CD8-positive, alpha-beta T cell (primary cell): ENCODE measurements at regions of chr10 and their contacts with region 1.

Region 1: DNA sequence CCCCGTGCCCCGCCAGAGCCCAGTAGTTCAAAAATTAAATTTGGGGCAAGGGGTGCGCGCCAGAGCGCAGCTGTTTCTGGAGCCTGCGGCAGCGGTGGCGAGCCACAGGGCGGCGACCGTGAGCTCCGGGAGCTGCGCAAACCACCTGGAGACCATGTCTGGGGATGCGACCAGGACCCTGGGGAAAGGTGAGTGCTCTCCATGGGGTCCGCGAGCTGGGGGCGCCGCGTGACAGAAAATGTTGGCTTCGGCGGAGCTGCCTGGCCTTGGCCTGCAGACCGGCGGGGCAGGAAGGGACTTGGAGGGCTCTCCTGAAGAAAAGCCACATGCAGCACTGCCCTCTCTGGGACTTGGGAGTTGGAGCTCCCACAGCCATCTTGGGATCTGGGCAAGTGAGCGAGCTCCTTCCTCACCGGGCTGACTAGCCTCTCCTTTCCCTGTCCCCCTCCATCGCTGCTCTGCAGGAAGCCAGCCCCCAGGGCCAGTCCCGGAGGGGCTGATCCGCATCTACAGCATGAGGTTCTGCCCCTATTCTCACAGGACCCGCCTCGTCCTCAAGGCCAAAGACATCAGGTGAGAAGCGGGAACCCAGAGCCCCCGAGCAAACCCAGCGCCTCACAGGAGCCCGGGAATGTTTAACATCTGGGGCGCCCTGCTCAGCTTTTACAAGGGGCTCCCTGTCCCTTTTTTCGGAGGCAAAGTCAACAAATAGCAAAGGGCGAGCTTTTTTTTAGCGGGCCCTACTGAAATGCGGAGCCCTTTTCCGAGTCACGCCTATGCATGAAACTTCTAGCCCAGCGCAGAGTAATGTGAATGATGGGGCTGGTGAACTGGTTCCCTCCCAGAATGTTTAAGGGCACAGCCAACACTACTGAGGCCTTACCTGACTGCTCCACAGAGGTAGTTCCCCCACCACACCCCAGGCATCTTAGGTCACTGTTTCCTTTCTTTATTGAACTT is 6.1 kb downstream of the GSTO2 start:
- DNase-seq: peak in 8 of 9 experiments; percentile 8 to 66 (median 46)
- ATAC-seq: peak; percentile 87
- H3K4me3 ChIP-seq: peak overlapping the region; percentile 1 to 31
- H3K4me3 Mint-ChIP-seq: peak overlapping the region; percentile 54
- H3K27ac ChIP-seq: no peak overlapping the region
- H3K27ac Mint-ChIP-seq: no peak overlapping the region
- H3K4me1 ChIP-seq: peaks cover 6% of the 10 kb centered on the region
- H3K4me1 Mint-ChIP-seq: peaks cover 2% of the 10 kb centered on the region
- H3K27me3 ChIP-seq: peaks cover 0 to 5% of the 10 kb centered on the region in 2 experiments
- H3K27me3 Mint-ChIP-seq: peaks cover 18% of the 10 kb centered on the region
- CTCF ChIP-seq: peak; percentile 78

Region 2: DNA sequence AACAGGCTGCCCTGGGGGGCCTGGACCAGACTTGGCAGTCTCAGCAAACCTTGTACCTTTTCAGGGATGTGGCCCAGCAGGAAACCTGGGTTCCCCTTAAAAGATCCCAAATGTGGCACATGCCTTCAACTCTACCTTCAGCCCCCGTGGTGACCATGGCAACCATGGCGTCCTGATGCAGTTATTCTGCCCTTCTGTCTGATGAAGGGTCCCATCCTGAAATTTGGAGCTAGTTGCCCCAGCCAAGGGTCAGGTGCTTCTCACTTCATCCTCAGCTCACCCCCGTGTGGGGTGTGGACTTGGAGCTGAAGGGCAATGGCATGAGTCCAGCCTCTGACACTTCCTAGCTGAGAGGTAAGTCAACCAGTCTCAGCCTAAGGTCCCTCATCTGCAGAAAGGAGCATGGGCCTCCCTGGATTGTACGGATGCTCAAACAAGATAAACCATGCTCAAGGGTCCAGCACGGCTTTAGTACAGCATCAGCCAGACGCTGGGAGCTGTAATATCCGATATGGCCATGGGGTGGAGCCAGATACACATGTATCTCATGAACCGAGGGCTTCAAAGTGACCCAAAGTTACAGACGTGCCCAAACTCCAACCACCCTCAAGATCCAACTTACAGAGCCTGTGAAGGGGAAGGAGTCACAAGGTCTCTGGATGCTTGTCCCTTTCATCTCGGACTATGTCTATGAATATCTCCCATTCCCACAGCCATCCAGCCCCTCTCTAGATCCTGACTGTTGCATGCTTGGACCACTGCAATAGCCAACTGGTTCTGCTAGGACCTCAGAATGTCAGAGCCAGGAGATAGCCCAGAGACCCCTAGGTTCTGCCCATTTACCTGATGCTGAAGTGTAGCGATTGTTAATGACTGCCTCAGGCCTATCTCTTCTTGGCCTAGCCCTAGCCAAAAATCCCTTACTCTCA is 562.2 kb before region 1 on chr10:
- CTCF ChIA-PET with region 1: no interaction called
- POLR2A ChIA-PET with region 1: no interaction called
- intact Hi-C with region 1: loop called in 1 of 2 experiments (anchors 1 kb)
- DNase-seq: peak; percentile 68 to 88 (median 80)
- ATAC-seq: peak; percentile 97
- H3K4me3 ChIP-seq: no peak overlapping the region
- H3K4me3 Mint-ChIP-seq: no peak overlapping the region
- H3K27ac ChIP-seq: no peak overlapping the region
- H3K27ac Mint-ChIP-seq: no peak overlapping the region
- H3K4me1 ChIP-seq: no peaks in the 10 kb centered on the region
- H3K4me1 Mint-ChIP-seq: no peaks in the 10 kb centered on the region
- H3K27me3 ChIP-seq: no peaks in the 10 kb centered on the region
- H3K27me3 Mint-ChIP-seq: no peaks in the 10 kb centered on the region
- CTCF ChIP-seq: peak; percentile 92

Region 3: DNA sequence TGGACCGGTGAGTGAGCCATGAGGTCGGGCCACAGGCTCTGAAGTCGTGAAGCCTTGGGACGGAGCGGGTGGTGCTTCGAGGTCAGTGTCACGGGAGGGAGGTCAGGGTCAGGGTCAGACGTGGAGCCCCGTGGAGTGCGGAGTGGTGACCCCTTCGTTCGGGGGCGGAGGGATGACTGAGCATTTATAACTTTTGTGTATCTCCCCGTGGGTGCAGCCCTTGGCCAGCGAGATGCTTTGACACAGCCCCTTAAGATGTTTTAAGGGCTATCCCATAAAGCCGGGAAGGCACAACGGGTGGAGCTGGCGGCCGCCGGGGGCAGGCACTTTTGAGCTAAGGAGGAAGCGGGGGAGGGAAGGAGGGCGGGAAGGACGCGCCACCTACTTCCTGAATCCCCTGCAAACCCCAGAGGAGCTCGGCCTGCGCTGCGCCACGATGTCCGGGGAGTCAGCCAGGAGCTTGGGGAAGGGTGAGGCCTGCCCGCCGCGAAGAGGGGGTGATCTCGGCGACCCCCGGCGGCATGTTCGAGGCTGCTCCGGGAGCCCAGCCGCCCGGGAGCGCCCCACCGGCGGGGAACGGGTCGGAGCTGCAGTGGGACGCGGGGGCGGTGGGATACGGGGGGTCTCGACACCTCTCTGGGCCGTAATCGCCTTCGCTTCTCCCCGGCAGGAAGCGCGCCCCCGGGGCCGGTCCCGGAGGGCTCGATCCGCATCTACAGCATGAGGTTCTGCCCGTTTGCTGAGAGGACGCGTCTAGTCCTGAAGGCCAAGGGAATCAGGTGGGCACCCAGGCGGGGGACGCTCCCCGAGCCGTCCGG is 20.3 kb before region 1 on chr10 and contains the start of gene GSTO1:
- CTCF ChIA-PET with region 1: interaction called, 30 read pairs
- POLR2A ChIA-PET with region 1: interaction called, 4 read pairs
- intact Hi-C with region 1: no loop called
- DNase-seq: peak in 8 of 9 experiments; percentile 37 to 76 (median 52)
- ATAC-seq: peak; percentile 59
- H3K4me3 ChIP-seq: peak within 1 kb of the TSS; percentile 81 to 84
- H3K4me3 Mint-ChIP-seq: peak within 1 kb of the TSS; percentile 91
- H3K27ac ChIP-seq: peak within 1 kb of the TSS; percentile 62 to 78
- H3K27ac Mint-ChIP-seq: peak within 1 kb of the TSS; percentile 94
- H3K4me1 ChIP-seq: peaks cover 20% of the 10 kb centered on the region
- H3K4me1 Mint-ChIP-seq: peaks cover 49% of the 10 kb centered on the region
- H3K27me3 ChIP-seq: no peaks in the 10 kb centered on the region
- H3K27me3 Mint-ChIP-seq: no peaks in the 10 kb centered on the region
- CTCF ChIP-seq: no peak
- total RNA-seq, gene GSTO1: 9.8 to 11.8 TPM

Region 4: DNA sequence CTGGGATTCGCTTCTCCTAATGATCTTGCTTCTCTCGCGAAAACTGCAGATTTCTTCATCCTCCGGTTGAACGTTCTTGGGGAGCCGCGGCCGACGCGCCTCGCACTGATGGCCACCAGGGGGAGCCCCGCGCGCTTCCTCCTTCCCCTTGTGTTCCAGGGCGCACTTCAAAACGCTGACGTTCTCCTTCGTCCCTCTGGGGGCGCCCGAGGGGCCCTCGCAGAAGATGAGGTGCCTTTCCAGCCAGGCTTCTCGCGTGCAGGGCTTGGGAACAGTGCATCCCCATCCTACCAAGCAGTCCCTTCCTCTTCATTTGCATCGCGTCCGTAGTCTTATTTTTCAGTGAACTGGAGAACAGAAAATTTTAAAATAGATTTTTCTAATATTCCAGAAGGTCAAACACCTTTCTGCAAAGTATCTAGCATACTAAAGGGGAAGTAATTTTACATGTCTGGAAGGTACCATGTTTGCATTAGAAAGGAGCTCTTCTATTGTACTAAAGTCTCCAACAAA is 16.5 kb after region 1 on chr10:
- CTCF ChIA-PET with region 1: interaction called, 109 read pairs
- POLR2A ChIA-PET with region 1: no interaction called
- intact Hi-C with region 1: no loop called
- DNase-seq: peak; percentile 80 to 93 (median 89)
- ATAC-seq: peak; percentile 100
- H3K4me3 ChIP-seq: no peak overlapping the region
- H3K4me3 Mint-ChIP-seq: no peak overlapping the region
- H3K27ac ChIP-seq: no peak overlapping the region
- H3K27ac Mint-ChIP-seq: no peak overlapping the region
- H3K4me1 ChIP-seq: peaks cover 3% of the 10 kb centered on the region
- H3K4me1 Mint-ChIP-seq: peaks cover 5% of the 10 kb centered on the region
- H3K27me3 ChIP-seq: no peaks in the 10 kb centered on the region
- H3K27me3 Mint-ChIP-seq: peaks cover 20% of the 10 kb centered on the region
- CTCF ChIP-seq: peak; percentile 99

Region 5: GRCh38 chr10:104308439-104308903 is 33.4 kb after region 1 on chr10:
- CTCF ChIA-PET with region 1: interaction called, 15 read pairs
- POLR2A ChIA-PET with region 1: interaction called, 3 read pairs
- intact Hi-C with region 1: no loop called
- DNase-seq: peak in 4 of 9 experiments; percentile 40 to 73 (median 54)
- ATAC-seq: peak; percentile 57
- H3K4me3 ChIP-seq: no peak overlapping the region
- H3K4me3 Mint-ChIP-seq: peak overlapping the region; percentile 61
- H3K27ac ChIP-seq: peak overlapping the region in 1 of 2 experiments; percentile 36
- H3K27ac Mint-ChIP-seq: peak overlapping the region; percentile 69
- H3K4me1 ChIP-seq: peaks cover 59% of the 10 kb centered on the region
- H3K4me1 Mint-ChIP-seq: peaks cover 70% of the 10 kb centered on the region
- H3K27me3 ChIP-seq: no peaks in the 10 kb centered on the region
- H3K27me3 Mint-ChIP-seq: no peaks in the 10 kb centered on the region
- CTCF ChIP-seq: no peak

Region 6: DNA sequence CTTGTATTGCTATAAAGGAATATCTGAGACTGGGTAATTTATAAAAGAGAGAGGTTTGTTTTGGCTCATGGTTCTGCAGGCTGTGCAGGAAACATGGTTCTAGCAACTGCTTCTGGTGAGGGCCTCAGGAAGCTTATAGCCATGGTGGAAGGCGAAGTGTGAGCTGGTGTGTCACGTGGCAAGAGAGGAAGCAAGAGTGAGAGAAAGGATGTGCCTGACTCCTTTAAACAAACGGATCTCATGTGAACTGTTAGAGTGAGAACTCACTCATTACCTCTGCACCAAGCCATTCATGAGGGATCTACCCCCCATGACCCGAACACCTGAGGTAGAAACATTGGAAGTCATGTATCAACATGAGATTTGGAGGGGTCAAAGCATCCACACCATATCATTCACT is 70.9 kb after region 1 on chr10:
- CTCF ChIA-PET with region 1: interaction called, 112 read pairs
- POLR2A ChIA-PET with region 1: no interaction called
- intact Hi-C with region 1: no loop called
- DNase-seq: peak in 1 of 9 experiments; percentile 54
- ATAC-seq: no peak
- H3K4me3 ChIP-seq: no peak overlapping the region
- H3K4me3 Mint-ChIP-seq: no peak overlapping the region
- H3K27ac ChIP-seq: peak overlapping the region in 1 of 2 experiments; percentile 44
- H3K27ac Mint-ChIP-seq: no peak overlapping the region
- H3K4me1 ChIP-seq: peaks cover 10% of the 10 kb centered on the region
- H3K4me1 Mint-ChIP-seq: peaks cover 12% of the 10 kb centered on the region
- H3K27me3 ChIP-seq: no peaks in the 10 kb centered on the region
- H3K27me3 Mint-ChIP-seq: no peaks in the 10 kb centered on the region
- CTCF ChIP-seq: no peak